ENCODE measurements at regions of chr3 and their contacts with region 1.

Region 1: DNA sequence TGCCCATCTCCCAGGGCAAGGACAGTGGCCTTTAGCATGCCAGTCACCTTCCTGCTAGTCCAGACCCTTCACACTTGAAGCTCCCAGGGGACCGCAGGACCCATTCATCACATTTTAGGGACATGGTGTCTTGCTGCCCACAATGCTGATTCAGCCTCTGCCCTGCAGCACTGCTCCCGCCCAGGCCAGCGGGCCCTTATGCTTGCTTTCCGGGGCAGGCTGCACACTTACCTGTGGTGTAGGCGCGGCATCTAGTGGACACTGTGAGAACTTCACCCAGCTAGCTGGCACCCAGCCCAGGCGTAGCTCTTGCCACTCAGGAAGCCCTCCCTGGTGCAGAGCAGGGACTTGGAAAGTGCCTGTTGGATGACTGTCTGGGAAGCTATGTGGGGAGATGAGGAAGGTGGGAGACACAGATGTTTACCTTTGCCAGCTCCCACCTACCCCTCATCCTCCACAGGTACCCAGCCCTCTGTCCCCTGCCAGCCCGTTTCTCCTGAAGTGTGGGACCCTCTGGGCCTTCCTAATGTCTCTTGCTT is 26.2 kb upstream of the NR2C2 start:
- DNase-seq: peak; percentile 87

Region 2: DNA sequence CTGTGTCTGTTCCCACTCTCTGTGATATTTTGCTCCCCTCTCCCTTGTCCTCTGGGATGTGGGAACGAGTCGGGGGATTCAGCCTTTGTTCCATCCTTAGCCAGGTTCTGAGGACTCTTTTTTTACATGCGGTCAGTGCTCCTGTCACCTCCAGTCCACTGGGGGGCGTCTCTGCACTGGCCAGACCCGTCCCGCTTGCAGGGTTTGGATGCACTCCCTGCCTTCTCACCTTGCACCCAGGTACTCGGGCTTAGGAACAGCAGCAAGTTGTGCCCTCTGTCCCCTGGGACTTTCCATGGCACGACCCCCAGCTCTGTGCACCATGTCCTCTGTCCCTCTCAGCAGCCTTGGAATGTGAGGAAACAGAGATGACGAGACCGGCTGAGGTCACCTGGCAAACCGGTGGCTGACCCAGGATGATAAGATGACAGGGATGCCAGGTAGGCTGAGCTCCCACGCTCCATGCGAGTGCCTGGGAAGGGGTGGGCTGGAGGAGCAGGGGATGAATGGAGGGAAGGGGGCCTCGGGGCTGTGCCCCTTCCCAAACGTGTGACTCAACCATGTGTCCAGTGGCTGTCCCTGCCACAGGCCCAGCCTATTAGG is 129.7 kb before region 1 on chr3:
- CTCF ChIA-PET with region 1: interaction called, 12 read pairs
- POLR2A ChIA-PET with region 1: no interaction called
- DNase-seq: peak; percentile 77

Region 3: DNA sequence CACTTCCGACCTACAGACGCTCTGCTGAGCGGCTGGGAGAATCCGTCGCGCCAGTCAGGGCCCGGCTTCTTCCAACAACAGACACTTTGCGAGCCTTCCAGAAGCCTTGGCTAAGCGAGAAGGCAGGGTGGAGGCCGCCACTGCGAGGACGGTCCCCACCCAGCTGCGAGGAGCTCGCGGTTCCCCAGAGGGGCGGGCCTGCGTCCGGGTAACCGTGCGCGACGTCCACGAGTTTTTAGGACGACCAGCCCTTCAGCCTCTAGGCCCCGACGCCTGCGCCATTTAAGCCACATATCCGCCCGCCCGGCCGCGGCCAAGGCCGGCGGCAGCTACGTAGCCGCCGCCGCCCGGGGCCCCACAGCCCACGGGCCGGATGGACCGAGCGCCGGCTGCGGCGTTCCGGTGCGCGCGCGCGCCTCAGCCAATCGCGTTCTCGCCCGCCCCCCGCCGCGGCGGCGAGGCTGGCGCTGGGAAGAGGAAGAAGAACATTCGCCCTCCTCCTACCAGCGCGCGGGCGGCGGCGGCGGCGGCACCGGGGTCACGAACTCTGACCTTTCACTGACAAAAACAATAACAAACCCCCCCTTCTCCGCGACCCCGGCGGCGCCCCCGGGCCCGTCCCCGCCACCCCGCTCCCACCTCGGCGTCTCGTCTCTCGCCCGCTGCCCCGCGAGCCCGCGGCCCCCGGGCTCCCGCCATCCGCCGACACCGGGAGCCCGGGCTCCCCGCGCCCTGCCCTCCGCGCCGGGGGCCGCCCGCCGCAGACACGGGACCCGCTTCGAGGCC is 26.1 kb after region 1 on chr3 and contains the start of gene NR2C2:
- CTCF ChIA-PET with region 1: no interaction called
- POLR2A ChIA-PET with region 1: interaction called, 13 read pairs
- DNase-seq: peak; percentile 80